ENCODE measurements at regions of chr12 and their contacts with region 1.

Region 1: DNA sequence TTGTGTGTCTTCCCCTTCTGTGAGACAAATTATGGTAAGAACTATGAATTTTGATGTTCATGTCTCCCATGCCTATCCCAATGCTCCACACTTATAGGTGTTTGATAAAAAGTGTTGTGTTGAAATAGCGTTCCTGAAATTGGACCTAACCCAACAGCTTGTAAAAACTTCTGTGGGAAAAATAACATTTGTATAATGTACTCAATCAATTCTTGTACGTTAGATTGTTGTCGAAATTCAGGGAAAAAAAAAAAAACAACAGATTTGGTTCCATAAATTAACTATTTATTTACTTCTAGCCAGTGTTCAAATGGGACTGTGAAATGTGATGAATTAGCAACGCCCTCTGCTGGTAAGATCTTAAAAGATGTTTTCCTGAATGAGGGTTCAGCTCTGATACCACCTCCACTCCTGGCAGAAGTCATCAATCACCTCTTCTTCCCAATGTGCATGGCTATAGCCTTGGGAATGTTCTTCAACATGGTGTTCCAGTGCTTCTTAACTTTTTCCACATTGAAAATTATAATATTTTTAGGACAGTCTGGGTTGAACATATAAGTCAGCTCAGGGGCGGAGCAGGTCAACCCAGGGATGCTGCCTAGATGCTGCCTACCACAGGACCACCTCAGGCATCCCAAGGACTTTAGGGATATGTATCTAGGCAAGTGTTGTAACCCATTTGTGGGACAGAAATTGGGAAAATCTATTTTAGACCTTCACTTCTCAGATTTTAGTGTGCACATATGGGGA is 170.6 kb downstream of the OTOGL start:
- DNase-seq: peak; percentile 27
- H3K4me3 ChIP-seq: no peak overlapping the region
- H3K27ac ChIP-seq: no peak overlapping the region
- H3K27me3 ChIP-seq: no peaks in the 10 kb centered on the region
- CTCF ChIP-seq: peak; percentile 60

Region 2: DNA sequence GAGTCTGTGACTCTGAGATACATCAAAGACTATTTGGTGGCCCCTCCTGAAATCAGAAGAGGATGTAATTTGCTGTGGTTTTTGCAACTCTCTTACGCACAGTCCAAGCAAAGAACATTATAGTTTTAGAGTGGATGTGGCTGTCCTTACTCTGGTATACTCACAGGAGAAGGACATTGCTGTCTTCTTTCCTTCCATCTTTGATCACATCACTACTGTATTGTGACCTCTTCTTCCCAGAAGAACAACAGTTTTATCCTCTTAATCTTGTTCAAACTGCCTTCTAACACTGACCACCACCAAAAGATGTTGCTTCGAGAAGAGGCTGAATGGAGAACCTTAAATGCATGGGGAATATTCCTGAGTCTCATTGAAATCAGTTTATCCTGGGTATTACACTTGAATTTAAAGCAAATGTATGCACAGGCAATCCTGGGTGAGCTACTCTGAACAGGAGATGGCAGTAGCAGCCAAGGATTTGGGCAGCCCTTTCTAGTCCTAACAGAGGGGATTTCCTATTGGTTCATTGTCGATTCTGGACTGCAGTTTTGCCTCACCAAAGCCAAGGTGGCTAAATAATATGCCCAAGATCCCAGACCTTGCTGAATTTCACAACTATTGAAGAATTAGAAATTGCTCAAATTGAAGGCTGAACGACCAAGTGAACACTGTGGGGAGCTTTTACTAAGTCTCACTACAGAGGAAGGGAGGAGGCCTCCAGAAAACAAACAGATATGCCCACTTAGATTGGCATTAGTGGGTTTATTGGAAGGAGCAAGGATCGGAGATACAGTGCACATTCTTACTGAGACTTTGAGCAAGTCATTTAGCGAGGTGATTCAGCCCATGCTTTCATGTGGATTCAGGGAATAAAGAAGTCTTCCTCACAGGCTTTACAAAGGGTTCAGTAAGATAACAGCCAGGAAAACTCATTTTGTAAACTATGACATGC is 862.0 kb before region 1 on chr12:
- CTCF ChIA-PET with region 1: interaction called, 27 read pairs
- POLR2A ChIA-PET with region 1: no interaction called
- DNase-seq: peak; percentile 81
- H3K4me3 ChIP-seq: no peak overlapping the region
- H3K27ac ChIP-seq: peak overlapping the region; percentile 22
- H3K27me3 ChIP-seq: no peaks in the 10 kb centered on the region
- CTCF ChIP-seq: peak; percentile 91

Region 3: DNA sequence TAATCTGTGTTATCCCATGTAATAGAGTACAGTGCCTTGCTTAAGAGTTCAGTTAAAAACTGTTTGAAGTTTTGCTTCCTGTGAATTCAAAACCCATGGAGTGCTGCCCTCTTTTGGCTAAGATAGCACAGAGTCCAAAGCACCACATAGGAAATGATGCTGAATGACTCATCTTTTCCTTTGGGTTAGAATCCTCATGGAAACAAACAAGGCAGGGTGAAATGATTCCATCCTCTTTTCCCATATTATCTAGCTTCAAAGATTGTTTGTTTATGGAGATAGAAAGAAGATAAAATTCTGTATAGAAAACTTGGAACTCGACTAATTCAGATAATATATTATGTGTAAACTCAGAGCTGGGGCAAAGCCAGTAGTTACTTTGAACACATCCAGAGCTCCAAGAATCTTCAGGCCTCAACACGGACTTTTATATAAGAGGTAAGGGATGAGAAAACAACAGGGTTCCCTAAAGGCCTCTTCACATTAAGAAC is 83.2 kb before region 1 on chr12:
- CTCF ChIA-PET with region 1: interaction called, 16 read pairs
- POLR2A ChIA-PET with region 1: no interaction called
- DNase-seq: peak; percentile 84
- H3K4me3 ChIP-seq: no peak overlapping the region
- H3K27ac ChIP-seq: peak overlapping the region; percentile 72
- H3K27me3 ChIP-seq: no peaks in the 10 kb centered on the region
- CTCF ChIP-seq: peak; percentile 87

Region 4: GRCh38 chr12:80200408-80200807 is 69.6 kb before region 1 on chr12:
- CTCF ChIA-PET with region 1: interaction called, 170 read pairs
- POLR2A ChIA-PET with region 1: no interaction called
- DNase-seq: no peak
- H3K4me3 ChIP-seq: no peak overlapping the region
- H3K27ac ChIP-seq: no peak overlapping the region
- H3K27me3 ChIP-seq: no peaks in the 10 kb centered on the region
- CTCF ChIP-seq: no peak

Region 5: GRCh38 chr12:80232837-80233236 is 37.1 kb before region 1 on chr12:
- CTCF ChIA-PET with region 1: interaction called, 12 read pairs
- POLR2A ChIA-PET with region 1: no interaction called
- DNase-seq: no peak
- H3K4me3 ChIP-seq: no peak overlapping the region
- H3K27ac ChIP-seq: no peak overlapping the region
- H3K27me3 ChIP-seq: no peaks in the 10 kb centered on the region
- CTCF ChIP-seq: no peak

Measured in AG04450 (cell line).